Endothelial cell of umbilical vein (primary cell): ENCODE measurements at regions of chr10 and their contacts with region 1.

Region 1: DNA sequence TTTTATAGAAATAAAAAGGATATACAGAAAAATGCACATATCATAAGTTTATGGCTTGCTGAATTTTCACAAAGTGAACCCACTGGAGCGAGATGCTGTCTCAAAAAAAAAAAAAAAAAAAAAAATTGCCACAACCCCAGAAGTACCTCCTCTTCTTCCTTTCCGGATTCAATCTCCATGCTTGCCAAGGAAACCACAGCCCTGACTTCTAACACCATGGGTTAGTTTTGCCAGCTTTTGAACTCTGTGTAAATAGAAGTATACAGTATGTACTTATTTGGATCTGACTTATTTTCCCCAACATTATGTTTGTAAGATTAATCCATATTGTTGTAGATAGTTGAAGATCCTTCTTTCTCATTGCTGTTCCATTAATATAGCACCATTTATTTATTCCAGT is 40.0 kb downstream of the FANK1 start:
- DNase-seq: peak; percentile 28
- H3K4me3 ChIP-seq: no peak overlapping the region
- H3K27ac ChIP-seq: no peak overlapping the region
- H3K4me1 ChIP-seq: no peaks in the 10 kb centered on the region
- H3K27me3 ChIP-seq: peaks cover 2 to 3% of the 10 kb centered on the region in 2 experiments
- CTCF ChIP-seq: no peak
- POLR2A ChIP-seq: no peak

Region 2: GRCh38 chr10:125961739-125962138 is 25.4 kb after region 1 on chr10:
- CTCF ChIA-PET with region 1: interaction called, 12 read pairs
- POLR2A ChIA-PET with region 1: no interaction called
- dilution Hi-C with region 1: no loop called
- intact Hi-C with region 1: no loop called
- DNase-seq: no peak
- H3K4me3 ChIP-seq: no peak overlapping the region
- H3K27ac ChIP-seq: no peak overlapping the region
- H3K4me1 ChIP-seq: no peaks in the 10 kb centered on the region
- H3K27me3 ChIP-seq: no peaks in the 10 kb centered on the region
- CTCF ChIP-seq: no peak
- POLR2A ChIP-seq: no peak

Region 3: GRCh38 chr10:126387023-126387921 is 450.9 kb after region 1 on chr10:
- CTCF ChIA-PET with region 1: interaction called, 28 read pairs
- POLR2A ChIA-PET with region 1: no interaction called
- dilution Hi-C with region 1: no loop called
- intact Hi-C with region 1: loop called (anchors 1 kb)
- DNase-seq: peak; percentile 48
- H3K4me3 ChIP-seq: no peak overlapping the region
- H3K27ac ChIP-seq: no peak overlapping the region
- H3K4me1 ChIP-seq: no peaks in the 10 kb centered on the region
- H3K27me3 ChIP-seq: peaks cover 3 to 22% of the 10 kb centered on the region in 2 experiments
- CTCF ChIP-seq: peak; percentile 66 to 73
- POLR2A ChIP-seq: no peak

Region 4: GRCh38 chr10:126598003-126598402 is 661.7 kb after region 1 on chr10:
- CTCF ChIA-PET with region 1: no interaction called
- POLR2A ChIA-PET with region 1: no interaction called
- dilution Hi-C with region 1: no loop called
- intact Hi-C with region 1: loop called (anchors 1 kb)
- DNase-seq: peak; percentile 10
- H3K4me3 ChIP-seq: no peak overlapping the region
- H3K27ac ChIP-seq: no peak overlapping the region
- H3K4me1 ChIP-seq: no peaks in the 10 kb centered on the region
- H3K27me3 ChIP-seq: no peaks in the 10 kb centered on the region
- CTCF ChIP-seq: peak; percentile 18 to 39
- POLR2A ChIP-seq: no peak

Region 5: DNA sequence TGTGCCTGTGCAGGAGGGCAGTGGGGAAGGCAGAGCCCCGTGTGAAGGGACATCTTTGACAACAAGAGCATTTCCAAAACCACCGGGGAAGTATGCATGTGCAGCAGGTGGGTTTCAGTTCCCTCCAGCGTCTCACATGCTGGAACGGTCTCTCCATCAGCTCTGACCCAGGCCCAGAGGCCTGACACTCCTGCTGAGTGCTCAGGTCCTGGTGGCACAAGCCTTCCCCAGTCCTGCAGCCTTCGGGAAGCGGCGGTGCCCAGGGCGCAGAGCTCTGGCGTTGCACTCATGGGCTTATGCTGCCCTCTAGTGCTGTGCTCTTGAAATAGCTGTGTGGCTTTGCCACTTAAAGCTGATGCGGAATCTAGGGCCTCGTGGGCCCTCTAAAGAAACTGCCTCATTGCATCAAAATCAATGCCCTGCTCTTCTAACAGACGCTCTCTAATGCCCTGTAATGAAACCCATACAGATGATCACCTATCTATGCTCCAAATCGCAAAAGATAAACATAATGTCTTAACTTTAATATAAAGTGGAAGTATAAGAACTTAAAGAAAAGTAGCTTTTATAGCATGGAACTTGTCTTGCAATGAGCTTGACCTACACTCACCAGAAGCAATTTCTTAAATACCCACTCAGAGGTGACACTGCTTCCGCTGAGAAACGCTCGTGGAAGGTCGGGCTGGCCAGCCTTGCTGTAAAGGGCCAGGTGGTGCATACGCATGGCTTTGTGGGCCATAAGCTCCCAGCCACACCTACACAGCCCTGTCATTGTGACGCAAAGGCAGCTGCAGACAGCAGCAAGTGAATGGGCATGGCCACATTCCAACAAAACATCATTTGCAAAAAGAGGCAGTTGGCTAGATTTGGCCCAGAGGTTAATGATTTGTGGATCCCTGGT is 1917.8 kb after region 1 on chr10:
- CTCF ChIA-PET with region 1: interaction called, 11 read pairs
- POLR2A ChIA-PET with region 1: no interaction called
- dilution Hi-C with region 1: no loop called
- intact Hi-C with region 1: no loop called
- DNase-seq: peak; percentile 63
- H3K4me3 ChIP-seq: no peak overlapping the region
- H3K27ac ChIP-seq: no peak overlapping the region
- H3K4me1 ChIP-seq: no peaks in the 10 kb centered on the region
- H3K27me3 ChIP-seq: no peaks in the 10 kb centered on the region
- CTCF ChIP-seq: peak; percentile 71 to 83
- POLR2A ChIP-seq: no peak